ENCODE measurements at regions of chr1 and their contacts with region 1.

Region 1: GRCh38 chr1:145706086-145706680 is 985 bp downstream of the PDZK1 start:
- DNase-seq: peak; percentile 68
- H3K4me3 Mint-ChIP-seq: no peak overlapping the region
- H3K27ac Mint-ChIP-seq: peak overlapping the region; percentile 65
- H3K4me1 Mint-ChIP-seq: peaks cover 26% of the 10 kb centered on the region
- H3K27me3 Mint-ChIP-seq: no peaks in the 10 kb centered on the region
- CTCF ChIP-seq: no peak

Region 2: DNA sequence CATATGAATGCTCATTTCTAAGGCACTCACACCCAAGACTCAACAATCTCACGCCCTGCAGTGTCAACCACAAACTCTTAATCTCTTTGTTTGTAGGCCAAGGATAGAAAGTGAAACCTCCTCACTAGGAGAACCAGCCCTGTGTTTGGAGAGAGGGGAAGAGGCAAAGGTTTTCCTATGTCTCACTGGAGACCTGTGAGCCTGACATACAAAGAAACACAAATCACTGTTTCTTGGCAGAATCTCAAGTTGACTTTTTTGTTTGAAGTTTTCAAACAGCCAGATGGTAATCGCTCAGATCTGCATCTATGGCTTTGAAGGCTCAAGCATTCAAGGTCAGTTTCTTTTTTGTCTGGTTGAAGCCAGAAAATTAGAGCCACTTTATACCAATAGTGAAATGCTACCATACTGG is 15.6 kb before region 1 on chr1:
- CTCF ChIA-PET with region 1: interaction called, 5 read pairs
- POLR2A ChIA-PET with region 1: interaction called, 11 read pairs
- intact Hi-C with region 1: no loop called
- DNase-seq: peak; percentile 57
- H3K4me3 Mint-ChIP-seq: no peak overlapping the region
- H3K27ac Mint-ChIP-seq: peak overlapping the region; percentile 44
- H3K4me1 Mint-ChIP-seq: peaks cover 21% of the 10 kb centered on the region
- H3K27me3 Mint-ChIP-seq: no peaks in the 10 kb centered on the region
- CTCF ChIP-seq: no peak